ENCODE measurements at regions of chr13 and their contacts with region 1.

Region 1: DNA sequence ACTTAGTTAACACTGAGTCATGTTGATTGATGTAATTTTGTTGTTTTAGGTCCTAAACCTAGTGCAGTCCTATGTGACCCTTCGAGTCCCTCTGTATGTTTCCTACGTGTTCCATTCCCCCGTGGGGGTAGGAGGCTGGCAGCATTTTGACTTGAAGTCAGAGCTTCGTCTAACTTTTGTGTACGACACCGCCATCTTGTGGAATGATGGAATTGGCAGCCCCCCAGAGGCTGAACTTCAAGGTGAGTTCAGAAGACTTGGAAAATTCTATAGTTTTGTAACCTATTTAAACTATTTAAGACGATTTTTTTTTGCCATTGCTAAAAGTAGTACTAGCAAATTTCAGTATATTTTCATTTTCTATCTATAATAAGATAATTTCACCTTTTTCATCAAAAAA is 117.9 kb downstream of the STOML3 start:
- DNase-seq: peak; percentile 88
- H3K4me3 ChIP-seq: no peak overlapping the region
- H3K27ac ChIP-seq: no peak overlapping the region
- H3K4me1 ChIP-seq: peaks cover 3% of the 10 kb centered on the region
- H3K27me3 ChIP-seq: no peaks in the 10 kb centered on the region
- CTCF ChIP-seq: peak; percentile 96

Region 2: DNA sequence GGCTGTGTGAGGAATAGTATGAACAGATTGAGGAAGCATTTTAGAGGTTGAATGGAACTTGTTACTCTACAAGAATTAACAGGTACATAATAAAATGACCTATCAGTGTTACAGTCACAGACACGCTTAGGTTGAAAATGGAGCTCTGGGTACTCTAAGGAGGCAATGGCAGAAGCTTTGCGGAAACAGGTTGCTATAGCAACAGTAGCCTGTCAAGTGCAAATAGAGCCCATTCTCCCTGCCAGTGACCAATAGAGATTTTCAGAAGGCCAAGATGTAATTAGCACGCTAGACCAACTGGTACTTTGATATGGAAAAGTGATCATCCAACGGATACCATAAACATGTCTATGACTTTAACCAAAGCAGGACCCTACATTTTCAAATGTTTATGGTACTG is 334.3 kb before region 1 on chr13:
- CTCF ChIA-PET with region 1: no interaction called
- POLR2A ChIA-PET with region 1: no interaction called
- intact Hi-C with region 1: loop called (anchors 5 kb)
- DNase-seq: no peak
- H3K4me3 ChIP-seq: no peak overlapping the region
- H3K27ac ChIP-seq: no peak overlapping the region
- H3K4me1 ChIP-seq: no peaks in the 10 kb centered on the region
- H3K27me3 ChIP-seq: no peaks in the 10 kb centered on the region
- CTCF ChIP-seq: no peak

Region 3: GRCh38 chr13:38577048-38577447 is 295.6 kb before region 1 on chr13:
- CTCF ChIA-PET with region 1: interaction called, 5 read pairs
- POLR2A ChIA-PET with region 1: no interaction called
- intact Hi-C with region 1: loop called (anchors 10 kb)
- DNase-seq: peak; percentile 21
- H3K4me3 ChIP-seq: no peak overlapping the region
- H3K27ac ChIP-seq: no peak overlapping the region
- H3K4me1 ChIP-seq: peaks cover 5% of the 10 kb centered on the region
- H3K27me3 ChIP-seq: no peaks in the 10 kb centered on the region
- CTCF ChIP-seq: 0 out of 2 replicates have a peak, but pooled peaks have one; percentile 24

Region 4: GRCh38 chr13:38602261-38602660 is 270.4 kb before region 1 on chr13:
- CTCF ChIA-PET with region 1: no interaction called
- POLR2A ChIA-PET with region 1: no interaction called
- intact Hi-C with region 1: no loop called
- DNase-seq: peak; percentile 33
- H3K4me3 ChIP-seq: no peak overlapping the region
- H3K27ac ChIP-seq: no peak overlapping the region
- H3K4me1 ChIP-seq: no peaks in the 10 kb centered on the region
- H3K27me3 ChIP-seq: no peaks in the 10 kb centered on the region
- CTCF ChIP-seq: no peak

Region 5: GRCh38 chr13:38670627-38671026 is 202.1 kb before region 1 on chr13:
- CTCF ChIA-PET with region 1: interaction called, 8 read pairs
- POLR2A ChIA-PET with region 1: no interaction called
- intact Hi-C with region 1: loop called (anchors 1 kb)
- DNase-seq: peak; percentile 97
- H3K4me3 ChIP-seq: no peak overlapping the region
- H3K27ac ChIP-seq: peak overlapping the region; percentile 61
- H3K4me1 ChIP-seq: peaks cover 59% of the 10 kb centered on the region
- H3K27me3 ChIP-seq: no peaks in the 10 kb centered on the region
- CTCF ChIP-seq: peak; percentile 87

Region 6: DNA sequence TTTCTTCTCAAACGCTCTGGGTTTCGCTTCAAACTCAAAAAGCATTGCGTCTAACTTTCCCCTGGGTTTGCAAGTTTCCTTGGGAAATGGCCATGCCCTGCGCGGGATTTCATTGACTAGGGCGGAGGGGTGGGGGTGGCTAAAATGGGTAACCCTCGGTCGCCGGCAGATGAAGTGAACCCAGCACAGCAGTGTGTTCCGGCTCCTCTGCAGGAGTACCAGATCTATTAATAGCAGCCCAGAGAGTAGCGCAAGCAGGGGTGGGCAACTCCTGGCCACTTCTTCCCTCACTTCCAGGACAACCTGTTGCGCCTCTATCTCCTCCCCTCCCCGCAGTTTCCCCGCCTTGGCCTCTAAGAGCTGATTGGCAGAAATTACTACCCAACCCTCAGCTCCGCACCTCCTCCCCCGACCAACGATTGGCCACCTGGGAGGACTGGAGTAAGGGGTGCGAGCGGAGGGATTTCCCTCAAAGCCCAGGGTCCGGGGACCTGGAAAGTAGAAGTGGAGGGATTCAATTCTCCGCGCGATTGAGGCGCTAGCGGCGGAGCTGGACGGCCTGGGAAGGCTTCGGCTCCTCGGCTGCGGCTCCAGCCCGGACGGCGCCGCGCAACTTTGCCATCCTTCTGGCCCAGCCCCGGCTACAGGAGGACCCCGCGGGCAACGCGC is 186.0 kb before region 1 on chr13 and contains the start of gene FREM2:
- CTCF ChIA-PET with region 1: interaction called, 12 read pairs
- POLR2A ChIA-PET with region 1: no interaction called
- intact Hi-C with region 1: loop called (anchors 1 kb)
- DNase-seq: peak; percentile 97
- H3K4me3 ChIP-seq: peak within 1 kb of the TSS; percentile 65
- H3K27ac ChIP-seq: no peak within 1 kb of the TSS
- H3K4me1 ChIP-seq: peaks cover 9% of the 10 kb centered on the region
- H3K27me3 ChIP-seq: no peaks in the 10 kb centered on the region
- CTCF ChIP-seq: no peak
- total RNA-seq, gene FREM2: 3.8 and 4.5 TPM in 2 replicates

Region 7: GRCh38 chr13:38763439-38764381 is 109.0 kb before region 1 on chr13:
- CTCF ChIA-PET with region 1: no interaction called
- POLR2A ChIA-PET with region 1: no interaction called
- intact Hi-C with region 1: loop called (anchors 5 kb)
- DNase-seq: peak; percentile 87
- H3K4me3 ChIP-seq: no peak overlapping the region
- H3K27ac ChIP-seq: no peak overlapping the region
- H3K4me1 ChIP-seq: peaks cover 4% of the 10 kb centered on the region
- H3K27me3 ChIP-seq: peaks cover 2% of the 10 kb centered on the region
- CTCF ChIP-seq: peak; percentile 92

Region 8: GRCh38 chr13:38777347-38778119 is 95.2 kb before region 1 on chr13:
- CTCF ChIA-PET with region 1: no interaction called
- POLR2A ChIA-PET with region 1: no interaction called
- intact Hi-C with region 1: loop called (anchors 5 kb)
- DNase-seq: no peak
- H3K4me3 ChIP-seq: no peak overlapping the region
- H3K27ac ChIP-seq: no peak overlapping the region
- H3K4me1 ChIP-seq: no peaks in the 10 kb centered on the region
- H3K27me3 ChIP-seq: no peaks in the 10 kb centered on the region
- CTCF ChIP-seq: no peak

Measured in A673 (cell line).